ENCODE measurements at regions of chr12 and their contacts with region 1.

Region 1: GRCh38 chr12:1795785-1796514 is 24.4 kb upstream of the LRTM2 start:
- ATAC-seq: peak; percentile 75 to 93 (median 86)
- H3K4me3 ChIP-seq: peak overlapping the region in 4 of 5 donors; percentile 2 to 19 (median 14)
- H3K27ac ChIP-seq: no peak overlapping the region
- H3K4me1 ChIP-seq: peaks cover 9 to 17% of the 10 kb centered on the region in 2 donors

Region 2: GRCh38 chr12:1634590-1635191 is 161.3 kb before region 1 on chr12:
- in situ Hi-C with region 1: loop called in 3 of 9 experiments (anchors 25 kb)
- ATAC-seq: peak in 6 of 8 experiments; percentile 36 to 74 (median 49)
- H3K4me3 ChIP-seq: no peak overlapping the region
- H3K27ac ChIP-seq: no peak overlapping the region
- H3K4me1 ChIP-seq: peaks cover 21 to 25% of the 10 kb centered on the region in 2 donors

Region 3: DNA sequence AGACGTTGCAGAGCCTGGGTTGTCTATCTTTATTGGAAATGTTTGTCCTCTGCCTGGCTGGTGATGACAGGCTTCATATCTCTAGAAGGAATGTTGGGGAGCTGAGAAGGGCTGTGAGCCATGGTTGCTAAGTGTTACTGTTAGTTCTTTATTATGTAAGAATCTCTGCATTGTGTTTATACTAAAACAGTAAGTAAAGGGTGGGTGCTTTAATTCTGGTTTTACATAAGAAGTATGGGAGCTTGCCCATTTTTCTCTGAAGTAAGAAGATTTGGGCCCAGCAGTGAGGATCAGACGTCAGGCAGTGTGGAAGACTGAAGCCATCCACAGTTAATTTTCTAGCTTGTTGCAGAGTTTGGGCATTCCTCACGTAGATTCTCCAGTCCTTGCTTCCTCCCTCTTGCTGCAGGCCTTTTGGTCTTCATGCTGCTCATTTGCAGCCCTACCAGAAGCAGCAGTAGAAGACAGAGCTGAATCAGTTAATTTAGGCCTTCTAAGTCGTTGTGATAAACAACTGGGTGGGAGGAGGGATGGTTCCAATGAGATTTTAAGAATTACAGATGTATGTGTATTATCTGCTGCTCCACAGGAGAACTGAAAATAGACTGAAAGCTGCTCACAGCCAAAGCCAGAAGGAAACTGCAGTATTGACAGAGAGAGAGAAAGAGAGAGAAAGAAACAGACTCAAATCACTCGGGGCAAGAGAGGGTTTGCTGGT is 145.5 kb before region 1 on chr12:
- in situ Hi-C with region 1: loop called in 6 of 9 experiments (anchors 10 to 25 kb)
- ATAC-seq: peak in 4 of 8 experiments; percentile 27 to 87 (median 68)
- H3K4me3 ChIP-seq: no peak overlapping the region
- H3K27ac ChIP-seq: no peak overlapping the region
- H3K4me1 ChIP-seq: peaks cover 0 to 6% of the 10 kb centered on the region in 2 donors

Region 4: GRCh38 chr12:1661553-1662335 is 134.2 kb before region 1 on chr12:
- in situ Hi-C with region 1: loop called in 3 of 9 experiments (anchors 10 to 25 kb)
- ATAC-seq: peak; percentile 94 to 96 (median 95)
- H3K4me3 ChIP-seq: peak overlapping the region; percentile 40 to 60 (median 42)
- H3K27ac ChIP-seq: no peak overlapping the region
- H3K4me1 ChIP-seq: peaks cover 1 to 4% of the 10 kb centered on the region in 2 donors

Measured in motor neuron (in vitro differentiated cells).